ENCODE measurements at regions of chr11 and their contacts with region 1.

Region 1: DNA sequence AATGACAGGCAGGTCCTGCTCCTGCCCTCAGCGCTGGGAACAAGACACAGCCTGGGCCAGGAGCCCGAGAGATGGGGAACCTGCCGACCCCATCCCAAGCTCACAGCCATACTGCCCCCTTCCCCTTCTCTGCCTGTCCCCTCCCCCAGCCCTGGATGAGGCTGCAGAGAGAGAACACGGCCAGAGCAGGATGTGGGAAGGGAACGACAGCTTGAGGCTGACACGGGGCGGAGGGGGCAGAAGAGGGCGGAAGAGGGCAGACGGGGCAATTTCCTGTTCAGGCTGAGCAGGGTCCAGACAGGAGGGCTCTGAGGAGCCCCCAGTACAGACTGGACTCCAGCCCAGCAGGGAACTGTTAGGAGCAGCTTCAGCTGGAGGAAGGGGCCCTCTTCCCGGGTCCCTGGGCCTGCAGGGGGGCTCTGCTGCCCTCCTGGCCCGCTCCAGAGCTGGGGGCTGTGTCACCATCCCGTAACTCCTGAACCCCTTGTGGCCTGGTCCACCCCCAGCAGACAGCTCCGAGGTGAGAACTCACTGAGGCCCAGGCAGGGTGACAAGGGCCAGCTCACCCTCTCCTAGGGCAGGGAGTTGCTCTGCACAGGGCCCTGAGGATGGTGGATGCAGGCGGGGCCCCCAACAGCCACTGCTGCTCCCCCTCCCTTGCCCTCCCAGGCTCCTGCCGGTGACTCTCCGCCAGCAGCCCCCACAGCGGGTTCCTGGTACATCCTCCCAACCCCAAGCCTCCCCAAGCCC is 5.7 kb downstream of the CTSD start:
- DNase-seq: peak; percentile 76
- H3K4me3 Mint-ChIP-seq: peak overlapping the region; percentile 49
- H3K27ac Mint-ChIP-seq: peak overlapping the region; percentile 83
- H3K4me1 Mint-ChIP-seq: peaks cover 57% of the 10 kb centered on the region
- H3K27me3 Mint-ChIP-seq: no peaks in the 10 kb centered on the region

Region 2: GRCh38 chr11:1772270-1773130 is 14.5 kb after region 1 on chr11:
- CTCF ChIA-PET with region 1: no interaction called
- POLR2A ChIA-PET with region 1: interaction called, 4 read pairs
- intact Hi-C with region 1: loop called (anchors 2 kb)
- DNase-seq: peak; percentile 80
- H3K4me3 Mint-ChIP-seq: peak overlapping the region; percentile 47
- H3K27ac Mint-ChIP-seq: peak overlapping the region; percentile 72
- H3K4me1 Mint-ChIP-seq: peaks cover 22% of the 10 kb centered on the region
- H3K27me3 Mint-ChIP-seq: no peaks in the 10 kb centered on the region

Region 3: DNA sequence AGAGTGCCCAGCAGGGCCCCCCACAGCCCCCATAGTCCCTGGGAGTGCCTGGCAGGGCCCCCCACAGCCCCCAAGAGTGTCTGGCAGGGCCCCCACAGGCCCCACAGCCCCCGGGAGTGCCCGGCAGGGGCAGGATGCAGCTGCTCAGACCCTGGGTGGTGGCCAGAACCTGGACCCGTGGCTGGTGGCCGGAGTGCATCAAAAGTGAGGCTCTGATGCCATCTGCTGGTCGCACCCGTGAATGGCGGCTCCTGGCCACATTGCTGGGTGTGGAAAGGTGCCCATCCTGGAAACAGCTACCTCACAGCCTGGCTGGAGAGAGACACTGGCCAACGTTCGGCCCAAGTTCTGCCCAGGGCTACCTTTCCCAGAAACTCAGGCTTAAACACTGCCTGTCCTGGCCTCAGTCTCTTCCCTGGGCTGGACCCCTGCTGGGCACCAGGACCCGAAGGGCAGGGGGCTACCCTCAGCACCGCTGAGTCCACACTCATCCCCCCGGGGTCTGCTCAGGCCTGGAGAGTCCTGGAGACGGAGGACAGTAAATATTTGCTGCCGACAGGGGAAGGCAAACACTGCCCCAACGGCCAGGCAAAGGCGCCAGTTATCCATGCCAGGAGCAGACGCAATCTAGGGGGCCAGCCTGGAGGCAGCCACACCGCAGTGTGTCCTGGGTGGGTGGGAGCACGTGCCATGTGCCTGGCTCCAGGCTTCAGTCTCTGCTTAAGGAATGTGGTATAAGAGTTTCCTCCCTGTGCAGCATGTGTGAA is 398.6 kb after region 1 on chr11:
- CTCF ChIA-PET with region 1: no interaction called
- POLR2A ChIA-PET with region 1: no interaction called
- intact Hi-C with region 1: no loop called
- DNase-seq: peak; percentile 70
- H3K4me3 Mint-ChIP-seq: no peak overlapping the region
- H3K27ac Mint-ChIP-seq: no peak overlapping the region
- H3K4me1 Mint-ChIP-seq: peaks cover 3% of the 10 kb centered on the region
- H3K27me3 Mint-ChIP-seq: peaks cover 3% of the 10 kb centered on the region